ENCODE measurements at regions of chr2 and their contacts with region 1.

Region 1: DNA sequence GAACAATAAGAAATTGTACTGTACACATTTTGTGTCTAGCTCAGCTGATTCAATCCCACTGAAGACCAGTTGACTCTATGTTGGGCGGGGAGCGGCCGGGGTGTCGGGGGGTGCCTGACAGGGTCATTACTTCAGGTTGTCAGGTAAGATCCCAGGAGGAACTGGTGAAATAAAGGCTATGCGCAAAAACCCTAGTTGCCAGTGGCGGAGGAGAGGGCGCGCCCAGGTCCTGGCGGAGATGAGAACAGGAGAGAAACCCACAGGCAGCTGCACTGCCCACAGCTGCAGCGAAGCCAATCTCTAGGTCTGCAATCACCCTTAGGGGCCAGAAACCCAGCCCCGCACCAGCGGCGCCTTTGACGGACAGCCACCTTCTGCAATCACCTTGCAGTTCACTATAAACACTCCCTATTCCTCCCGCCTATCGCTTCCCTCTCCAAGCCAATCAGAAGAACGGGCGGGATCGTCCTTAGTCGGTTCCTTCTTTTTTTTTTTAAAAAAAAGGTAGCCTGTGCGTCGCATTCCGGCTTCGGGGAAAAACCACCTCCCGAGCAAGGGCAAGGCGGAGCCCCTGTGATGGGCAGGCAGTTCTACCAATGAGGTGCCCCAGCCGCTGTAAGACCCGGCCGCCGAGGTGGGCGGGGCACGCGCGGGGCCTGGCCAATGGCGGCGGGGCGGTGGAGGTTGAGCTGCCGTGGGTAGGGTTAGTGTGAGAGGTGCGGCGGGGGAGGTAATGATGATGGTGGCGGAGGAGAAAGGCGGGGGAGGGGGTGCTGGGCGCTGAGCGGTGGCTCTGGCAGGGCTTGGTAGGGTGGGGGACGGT is at the start of gene EHBP1:
- DNase-seq: peak; percentile 98
- H3K4me3 Mint-ChIP-seq: peak within 1 kb of the TSS; percentile 76
- H3K27ac Mint-ChIP-seq: peak within 1 kb of the TSS; percentile 74
- H3K4me1 Mint-ChIP-seq: peaks cover 28% of the 10 kb centered on the region
- H3K27me3 Mint-ChIP-seq: no peaks in the 10 kb centered on the region
- total RNA-seq, gene EHBP1: 23.5 to 23.6 TPM

Region 2: DNA sequence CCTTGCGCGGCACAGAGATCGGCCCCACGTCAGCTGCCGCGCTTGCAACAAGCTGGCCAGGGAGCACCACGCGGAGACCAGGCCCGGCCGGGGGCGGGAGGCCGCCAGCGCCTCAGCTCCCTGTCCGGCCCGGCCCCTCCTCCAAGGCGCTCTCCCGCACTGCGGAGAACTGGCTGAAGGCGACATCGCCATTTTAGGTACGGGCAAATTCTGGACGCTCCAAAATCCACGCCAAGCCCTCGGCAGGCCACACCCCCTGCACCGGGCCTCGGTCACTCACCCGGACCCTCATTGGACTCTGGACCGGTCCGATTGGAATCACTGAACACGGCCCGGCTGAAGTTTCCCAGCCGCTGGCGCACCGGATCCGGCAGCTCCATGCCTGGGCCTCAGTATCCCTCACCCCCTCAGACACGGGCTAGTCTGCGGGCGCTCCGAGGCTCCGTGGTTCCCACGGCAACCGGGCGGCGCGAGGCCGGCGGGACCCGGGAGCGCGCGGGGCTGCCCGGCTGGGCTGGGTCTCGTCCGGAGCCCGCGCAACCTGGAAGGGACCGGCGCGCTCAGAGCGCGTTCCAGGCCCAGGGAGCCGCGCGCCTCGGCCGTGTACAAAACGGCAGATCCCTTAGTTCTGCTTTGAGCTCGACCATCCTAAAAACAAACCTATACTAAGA is 199.3 kb before region 1 on chr2 and contains the start of gene TMEM17:
- CTCF ChIA-PET with region 1: no interaction called
- POLR2A ChIA-PET with region 1: no interaction called
- intact Hi-C with region 1: loop called (anchors 5 kb)
- DNase-seq: peak; percentile 53
- H3K4me3 Mint-ChIP-seq: peak within 1 kb of the TSS; percentile 73
- H3K27ac Mint-ChIP-seq: no peak within 1 kb of the TSS
- H3K4me1 Mint-ChIP-seq: peaks cover 7% of the 10 kb centered on the region
- H3K27me3 Mint-ChIP-seq: peaks cover 19% of the 10 kb centered on the region
- total RNA-seq, gene TMEM17: 0.24 TPM in 1 of 2 experiments, not detected in the other

Region 3: GRCh38 chr2:63050334-63051041 is 345.3 kb after region 1 on chr2 and contains the start of gene OTX1:
- CTCF ChIA-PET with region 1: no interaction called
- POLR2A ChIA-PET with region 1: no interaction called
- intact Hi-C with region 1: loop called (anchors 5 kb)
- DNase-seq: peak; percentile 67
- H3K4me3 Mint-ChIP-seq: peak within 1 kb of the TSS; percentile 77
- H3K27ac Mint-ChIP-seq: peak within 1 kb of the TSS; percentile 62
- H3K4me1 Mint-ChIP-seq: peaks cover 65% of the 10 kb centered on the region
- H3K27me3 Mint-ChIP-seq: peaks cover 80% of the 10 kb centered on the region
- total RNA-seq, gene OTX1: not detected

Measured in activated CD4-positive, alpha-beta memory T cell treated with anti-CD3 and anti-CD28 coated beads for 36 hours (primary cell).